Left cardiac atrium (tissue), 4 donors: ENCODE measurements at regions of chr2 and their contacts with region 1.

Region 1: DNA sequence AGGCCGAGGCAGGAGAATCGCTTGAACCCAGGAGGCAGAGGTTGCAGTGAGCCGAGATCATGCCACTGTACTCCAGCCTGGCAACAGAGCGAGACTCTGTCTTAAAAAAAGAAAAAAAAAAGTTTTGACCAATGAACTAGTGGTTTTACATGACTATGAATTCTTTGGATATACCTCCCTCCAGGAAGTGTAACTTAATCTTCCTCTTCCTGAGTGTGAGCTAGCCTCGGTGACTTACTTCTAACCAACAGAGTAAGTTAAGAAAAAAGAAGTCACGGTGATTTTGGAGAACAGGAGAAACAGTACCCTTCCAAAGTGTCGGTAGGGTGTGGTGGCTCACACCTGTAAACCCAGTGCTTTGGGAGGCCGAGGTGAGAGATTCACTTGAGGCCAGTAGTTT is 7.1 kb downstream of the TIA1 start:
- DNase-seq: no peak
- ATAC-seq: no peak

Region 2: DNA sequence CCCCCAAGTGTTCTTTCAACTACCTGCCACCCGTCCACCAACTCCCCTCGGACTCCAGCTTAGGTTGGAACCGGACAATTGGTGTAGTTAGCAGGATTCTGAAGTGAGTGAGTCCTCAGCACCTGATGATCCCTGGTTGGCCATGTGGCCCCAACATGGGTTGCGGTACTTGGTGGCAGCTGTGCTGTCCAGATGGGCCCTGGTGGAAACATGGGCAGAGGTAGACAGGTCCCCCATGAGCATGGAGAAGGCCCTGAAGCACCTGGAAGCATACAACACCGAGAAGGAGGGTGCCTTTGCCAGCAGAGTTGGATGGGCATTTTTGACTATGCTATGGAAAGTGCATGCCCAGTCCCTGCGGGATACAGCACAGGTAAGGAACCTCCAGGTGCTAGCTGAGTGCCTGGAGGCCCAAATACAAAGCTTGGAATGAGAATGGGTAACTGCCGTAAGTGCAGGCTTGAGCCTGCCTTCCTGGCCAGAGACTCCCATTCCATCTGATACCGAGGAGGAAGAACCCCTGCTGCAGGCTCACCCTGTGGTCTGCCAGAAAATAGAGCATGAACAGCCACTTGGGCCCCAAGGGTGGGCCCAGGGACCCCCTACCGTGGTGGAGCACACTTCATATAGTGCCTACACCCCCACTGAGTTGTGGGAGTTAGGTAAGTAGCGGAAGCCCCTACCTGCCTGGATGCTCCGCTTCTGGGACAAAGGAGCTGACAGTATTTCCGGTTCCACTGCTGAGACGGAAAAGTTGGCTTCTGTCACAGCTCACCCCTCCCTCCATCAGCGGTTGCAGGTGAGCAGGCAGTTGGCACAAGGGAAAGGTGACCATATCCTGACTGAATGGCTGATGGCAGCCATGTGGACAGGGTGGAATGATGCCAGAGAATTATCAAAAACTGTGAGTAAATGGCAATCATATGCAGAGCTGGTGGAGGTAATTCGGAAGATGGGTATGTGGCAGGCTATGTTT is 39.2 kb before region 1 on chr2:
- intact Hi-C with region 1: loop called in 1 of 2 experiments (anchors 5 kb)
- DNase-seq: no peak
- ATAC-seq: no peak